Stomach (tissue), 19 donors: ENCODE measurements at regions of chr7 and their contacts with region 1.

Region 1: GRCh38 chr7:122975341-122975740 is 20.2 kb downstream of the TAS2R16 start:
- DNase-seq: no peak
- H3K4me3 ChIP-seq: no peak overlapping the region
- H3K27ac ChIP-seq: no peak overlapping the region
- H3K4me1 ChIP-seq: no peaks in the 10 kb centered on the region
- H3K27me3 ChIP-seq: no peaks in the 10 kb centered on the region
- CTCF ChIP-seq: no peak
- EP300 ChIP-seq: no peak
- POLR2A ChIP-seq: no peak

Region 2: DNA sequence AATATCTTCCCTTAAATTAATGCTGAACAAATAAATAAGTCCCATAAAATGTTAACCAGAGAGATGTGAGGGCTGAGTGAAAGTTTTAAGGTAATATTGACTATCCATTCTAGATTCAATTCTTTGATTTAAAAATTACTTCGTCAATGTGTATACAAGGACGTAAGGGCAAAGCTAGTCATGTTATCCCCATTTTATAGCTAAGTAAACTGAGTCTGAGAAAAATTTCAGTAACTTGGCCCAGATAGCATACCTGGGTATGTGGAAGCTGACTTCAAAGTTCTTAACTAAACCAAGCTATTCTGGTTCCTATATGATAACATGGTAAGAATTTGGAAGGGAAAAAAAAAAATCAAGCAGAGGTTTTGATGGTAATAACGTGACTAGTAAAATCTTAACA is 161.5 kb before region 1 on chr7:
- intact Hi-C with region 1: no loop called
- DNase-seq: no peak
- H3K4me3 ChIP-seq: no peak overlapping the region
- H3K27ac ChIP-seq: no peak overlapping the region
- H3K4me1 ChIP-seq: peaks cover 0 to 8% (median 0%) of the 10 kb centered on the region in 4 donors
- H3K27me3 ChIP-seq: no peaks in the 10 kb centered on the region
- CTCF ChIP-seq: no peak
- EP300 ChIP-seq: no peak
- POLR2A ChIP-seq: no peak

Region 3: GRCh38 chr7:122827763-122828162 is 147.6 kb before region 1 on chr7:
- intact Hi-C with region 1: loop called (anchors 10 kb)
- DNase-seq: no peak
- H3K4me3 ChIP-seq: no peak overlapping the region
- H3K27ac ChIP-seq: no peak overlapping the region
- H3K4me1 ChIP-seq: no peaks in the 10 kb centered on the region
- H3K27me3 ChIP-seq: no peaks in the 10 kb centered on the region
- CTCF ChIP-seq: no peak
- EP300 ChIP-seq: no peak
- POLR2A ChIP-seq: no peak

Region 4: DNA sequence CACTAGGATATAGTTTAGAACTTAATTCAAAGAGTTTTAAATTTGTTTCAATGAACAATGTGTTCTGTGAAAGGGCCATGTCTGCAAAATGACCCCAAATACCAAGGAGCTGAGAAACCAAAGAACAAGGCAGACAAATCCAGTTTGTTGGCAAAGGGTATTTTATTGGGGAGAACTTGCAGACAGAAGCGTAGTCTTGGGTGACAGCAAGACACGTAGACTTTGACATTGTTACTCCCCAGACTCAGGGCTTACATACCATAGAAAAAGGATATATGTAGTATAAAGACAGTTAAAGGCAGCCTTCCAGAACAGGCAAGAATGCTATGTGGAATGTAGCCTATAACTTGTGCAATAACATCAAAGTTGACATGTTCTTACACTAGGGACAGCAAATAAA is 115.1 kb after region 1 on chr7:
- intact Hi-C with region 1: no loop called
- DNase-seq: no peak
- H3K4me3 ChIP-seq: no peak overlapping the region
- H3K27ac ChIP-seq: no peak overlapping the region
- H3K4me1 ChIP-seq: no peaks in the 10 kb centered on the region
- H3K27me3 ChIP-seq: no peaks in the 10 kb centered on the region
- CTCF ChIP-seq: no peak
- EP300 ChIP-seq: no peak
- POLR2A ChIP-seq: no peak